Prostate gland (tissue), 2 donors: ENCODE measurements at regions of chr10 and their contacts with region 1.

Region 1: DNA sequence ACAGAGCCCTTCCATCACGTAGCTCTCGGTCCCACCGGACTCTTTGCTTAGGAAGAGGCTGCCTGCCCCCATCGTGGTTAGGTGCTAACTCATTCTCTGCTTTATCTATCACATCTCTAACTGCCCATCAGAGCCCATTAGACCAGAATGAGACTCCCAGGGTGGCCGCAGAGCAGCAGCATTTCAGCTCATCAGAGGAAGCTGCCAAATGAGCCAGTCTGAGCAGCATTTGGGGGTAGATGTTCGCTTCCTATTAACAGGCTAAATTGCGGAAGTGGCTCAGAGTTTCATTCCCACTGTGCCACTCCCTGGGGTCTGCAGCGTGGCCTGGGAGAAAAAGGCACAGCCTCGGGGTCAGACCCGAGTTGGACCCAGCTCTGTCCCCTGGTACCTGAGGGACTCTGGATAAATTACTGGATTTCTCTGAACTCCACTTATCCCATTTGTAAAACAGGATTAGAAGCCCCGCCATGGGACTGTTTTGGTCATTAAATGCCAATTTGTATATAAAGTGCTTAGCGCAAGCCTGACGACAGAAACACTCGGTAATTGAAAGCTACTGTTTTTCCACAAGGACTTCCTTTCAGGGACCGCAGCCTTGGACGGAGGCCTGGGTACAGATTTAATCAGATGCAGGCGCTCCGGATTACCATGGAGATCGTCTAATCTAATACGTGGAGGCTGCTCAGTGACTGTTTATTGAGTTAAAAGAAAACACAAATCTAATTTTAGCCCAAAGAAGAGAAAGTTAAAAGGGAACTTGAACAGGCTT is 73.8 kb upstream of the PRLHR start:
- DNase-seq: no peak
- H3K4me3 ChIP-seq: no peak overlapping the region
- H3K27ac ChIP-seq: peak overlapping the region in 1 of 2 donors; percentile 32
- H3K4me1 ChIP-seq: no peaks in the 10 kb centered on the region
- H3K27me3 ChIP-seq: no peaks in the 10 kb centered on the region
- CTCF ChIP-seq: no peak
- POLR2A ChIP-seq: no peak

Region 2: GRCh38 chr10:118272149-118272721 is 397.0 kb before region 1 on chr10:
- intact Hi-C with region 1: no loop called
- DNase-seq: no peak
- H3K4me3 ChIP-seq: no peak overlapping the region
- H3K27ac ChIP-seq: no peak overlapping the region
- H3K4me1 ChIP-seq: no peaks in the 10 kb centered on the region
- H3K27me3 ChIP-seq: no peaks in the 10 kb centered on the region
- CTCF ChIP-seq: no peak
- POLR2A ChIP-seq: no peak

Region 3: DNA sequence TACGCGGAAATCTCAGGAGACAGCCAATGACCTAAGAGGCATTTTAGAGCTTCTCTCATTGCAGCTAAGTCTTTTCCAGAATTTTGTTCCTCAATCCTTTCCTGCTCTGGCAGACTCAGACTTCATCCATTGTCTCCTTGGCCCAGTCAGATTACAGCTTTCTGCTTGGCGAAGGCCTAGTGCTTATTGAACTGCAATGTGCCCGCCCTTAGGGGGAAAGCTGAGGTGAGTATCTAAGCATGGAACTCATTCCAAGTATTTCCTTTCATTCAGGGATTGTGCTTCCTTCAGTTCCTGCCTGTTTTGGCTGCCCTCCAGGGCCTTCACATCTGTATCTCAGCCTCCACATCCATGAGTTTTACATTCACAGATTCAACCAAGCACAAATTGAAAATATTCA is 111.3 kb before region 1 on chr10:
- intact Hi-C with region 1: no loop called
- DNase-seq: no peak
- H3K4me3 ChIP-seq: no peak overlapping the region
- H3K27ac ChIP-seq: no peak overlapping the region
- H3K4me1 ChIP-seq: no peaks in the 10 kb centered on the region
- H3K27me3 ChIP-seq: no peaks in the 10 kb centered on the region
- CTCF ChIP-seq: no peak
- POLR2A ChIP-seq: no peak

Region 4: GRCh38 chr10:118621304-118621948 is 47.8 kb before region 1 on chr10:
- intact Hi-C with region 1: loop called (anchors 5 kb)
- DNase-seq: peak; percentile 17
- H3K4me3 ChIP-seq: no peak overlapping the region
- H3K27ac ChIP-seq: no peak overlapping the region
- H3K4me1 ChIP-seq: no peaks in the 10 kb centered on the region
- H3K27me3 ChIP-seq: no peaks in the 10 kb centered on the region
- CTCF ChIP-seq: no peak
- POLR2A ChIP-seq: no peak